WTC11 (cell line): ENCODE measurements at regions of chr22 and their contacts with region 1.

Region 1: DNA sequence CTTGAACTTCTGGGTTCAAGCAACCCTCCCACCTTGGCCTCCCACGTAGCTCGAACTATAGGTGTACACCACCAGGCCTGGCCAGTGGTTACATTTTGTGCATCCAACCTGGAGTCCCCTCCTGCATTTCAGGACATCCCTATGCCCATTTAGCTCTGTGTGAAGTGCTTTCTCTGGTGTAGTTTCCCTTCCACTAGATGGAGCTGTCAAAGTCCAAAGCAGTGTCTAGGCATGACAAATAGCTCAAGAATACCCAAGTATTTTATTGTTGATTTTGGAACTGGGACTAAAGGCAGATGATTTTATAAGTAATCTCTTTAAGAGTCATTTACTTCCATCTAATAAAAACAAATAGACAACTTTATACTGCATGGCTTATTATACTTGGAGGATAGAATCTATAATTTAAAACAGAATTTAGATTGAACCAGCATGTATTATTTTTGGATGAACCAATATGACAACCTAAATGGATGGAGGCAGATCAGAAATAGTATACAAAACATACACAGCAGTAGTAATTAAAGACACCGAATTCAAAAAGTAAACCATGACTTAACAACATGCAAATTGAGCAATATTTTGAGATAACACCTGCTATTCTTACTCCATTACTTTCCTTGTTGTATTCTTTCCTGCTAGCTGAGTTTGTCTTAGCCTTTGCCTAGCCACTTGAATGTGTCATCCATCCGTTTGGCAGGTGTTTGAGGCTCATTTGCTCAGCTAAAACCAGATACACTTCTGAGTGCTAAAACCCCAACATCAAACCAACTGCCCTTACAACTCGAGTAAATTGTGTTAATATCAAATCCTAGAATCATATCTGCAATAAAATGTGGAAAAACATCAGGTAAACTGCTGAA is 37.7 kb downstream of the EIF4ENIF1 start:
- DNase-seq: no peak
- ATAC-seq: peak; percentile 85
- H3K4me3 Mint-ChIP-seq: no peak overlapping the region
- H3K27ac Mint-ChIP-seq: no peak overlapping the region
- H3K4me1 Mint-ChIP-seq: no peaks in the 10 kb centered on the region
- H3K27me3 Mint-ChIP-seq: no peaks in the 10 kb centered on the region
- CTCF ChIP-seq: no peak

Region 2: GRCh38 chr22:31361743-31362142 is 90.2 kb before region 1 on chr22:
- CTCF ChIA-PET with region 1: no interaction called
- POLR2A ChIA-PET with region 1: no interaction called
- DNase-seq: no peak
- ATAC-seq: no peak
- H3K4me3 Mint-ChIP-seq: no peak overlapping the region
- H3K27ac Mint-ChIP-seq: no peak overlapping the region
- H3K4me1 Mint-ChIP-seq: peaks cover 11% of the 10 kb centered on the region
- H3K27me3 Mint-ChIP-seq: no peaks in the 10 kb centered on the region; the same call in 1 of the 2 replicates
- CTCF ChIP-seq: no peak

Region 3: DNA sequence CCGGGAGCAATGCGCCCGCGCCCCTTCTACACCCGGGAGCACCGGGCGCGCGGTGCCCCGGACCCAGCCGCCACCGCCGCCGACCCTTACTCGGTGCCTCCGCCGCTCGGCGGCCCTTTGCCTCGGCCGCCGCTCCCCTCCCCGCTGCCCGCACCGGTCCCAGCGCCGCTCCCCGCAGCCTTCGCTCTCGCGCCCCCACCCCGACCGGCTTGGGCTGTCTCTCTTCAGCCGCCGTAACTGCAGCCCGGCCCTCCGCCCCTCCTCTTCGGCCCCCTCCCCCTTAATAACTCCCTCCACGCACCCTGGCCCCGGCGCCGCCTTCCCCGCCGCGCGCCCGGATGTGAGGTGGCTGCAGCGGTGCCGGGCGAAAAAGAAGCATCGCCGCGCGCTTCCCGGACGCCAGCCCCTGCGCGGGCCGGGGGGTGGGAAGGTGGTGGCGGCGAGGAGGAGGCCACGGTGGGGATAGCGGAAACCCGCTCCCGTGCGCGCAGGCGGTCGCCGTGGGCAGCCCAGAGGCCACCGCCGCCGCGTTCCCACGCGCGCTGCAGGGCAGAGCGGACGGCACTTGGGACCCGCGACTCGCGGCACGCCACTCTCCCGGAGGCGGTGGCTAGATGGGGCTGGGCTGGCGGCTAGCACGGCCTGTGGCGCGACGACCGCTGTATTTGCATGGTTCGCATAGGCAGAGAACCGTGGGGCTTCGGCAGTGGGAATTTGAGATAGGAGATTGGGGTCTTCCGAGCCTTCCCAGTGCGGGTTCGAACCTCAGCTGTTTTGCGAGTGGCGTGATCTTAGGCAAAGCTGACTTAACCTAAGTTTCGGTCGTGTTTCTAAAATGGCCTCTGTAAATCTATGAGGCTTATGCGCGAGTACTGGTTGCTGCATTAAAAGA is 37.9 kb after region 1 on chr22 and contains the start of gene EIF4ENIF1:
- CTCF ChIA-PET with region 1: interaction called, 10 read pairs
- POLR2A ChIA-PET with region 1: no interaction called
- DNase-seq: peak; percentile 81
- ATAC-seq: peak; percentile 77
- H3K4me3 Mint-ChIP-seq: peak within 1 kb of the TSS; percentile 88
- H3K27ac Mint-ChIP-seq: peak within 1 kb of the TSS; percentile 98
- H3K4me1 Mint-ChIP-seq: peaks cover 35% of the 10 kb centered on the region
- H3K27me3 Mint-ChIP-seq: no peaks in the 10 kb centered on the region
- CTCF ChIP-seq: no peak
- total RNA-seq, gene EIF4ENIF1: 19.7 to 23.6 TPM (median 22.8 TPM) in 3 replicates

Region 4: DNA sequence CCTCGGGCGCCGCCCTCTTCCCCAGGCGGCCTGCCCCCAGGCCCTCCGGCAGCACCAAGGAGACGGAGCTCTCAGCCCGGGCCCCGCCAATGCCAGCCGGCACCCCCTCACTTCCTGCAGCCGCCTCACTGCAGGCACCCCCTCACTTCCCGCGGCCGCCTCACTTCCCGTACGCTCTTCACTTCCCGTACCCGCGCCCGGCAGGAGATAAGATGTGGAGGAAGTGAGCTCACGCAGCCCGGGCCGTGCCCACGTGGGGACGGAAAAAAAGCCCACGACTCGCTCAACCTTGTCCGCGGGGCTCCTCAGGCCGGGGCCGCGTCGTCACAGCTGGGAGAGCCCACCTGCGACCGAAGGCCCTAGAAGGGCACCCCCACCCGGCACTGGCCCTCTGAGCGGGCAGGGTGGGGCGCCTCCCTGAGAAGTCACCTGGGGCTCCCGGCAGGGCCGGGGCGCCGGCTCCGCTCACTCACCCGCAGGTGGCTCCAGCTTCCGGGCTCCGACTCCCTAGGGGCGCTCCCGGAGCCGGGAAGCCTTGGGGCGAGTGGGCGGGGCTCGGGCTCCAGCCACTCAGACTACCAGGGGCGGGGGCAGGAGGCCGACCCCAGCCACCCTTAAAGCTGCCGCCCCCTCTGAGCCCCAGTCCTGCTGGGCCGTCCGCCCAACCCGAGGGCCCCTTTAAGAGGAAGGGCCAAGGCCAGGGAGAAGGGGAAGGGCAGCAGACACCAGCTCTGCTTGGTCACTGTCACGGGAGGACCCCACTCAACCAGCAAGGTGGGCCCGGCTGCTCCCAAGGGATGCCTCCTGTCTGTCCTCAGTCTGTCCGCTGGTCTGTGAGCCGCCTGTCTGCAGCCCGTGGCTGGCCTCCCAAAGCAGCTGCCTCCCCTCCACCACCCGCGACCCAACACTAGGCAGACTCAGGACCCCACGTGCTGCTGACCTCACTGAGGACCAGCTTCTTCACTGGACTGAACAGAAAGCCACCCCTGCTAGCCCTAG is 178.7 kb after region 1 on chr22:
- CTCF ChIA-PET with region 1: interaction called, 15 read pairs
- POLR2A ChIA-PET with region 1: no interaction called
- DNase-seq: peak; percentile 86
- ATAC-seq: peak; percentile 78
- H3K4me3 Mint-ChIP-seq: peak overlapping the region; percentile 85
- H3K27ac Mint-ChIP-seq: peak overlapping the region; percentile 68; the same call in 1 of the 2 replicates
- H3K4me1 Mint-ChIP-seq: peaks cover 31% of the 10 kb centered on the region
- H3K27me3 Mint-ChIP-seq: no peaks in the 10 kb centered on the region
- CTCF ChIP-seq: no peak